ENCODE measurements at regions of chr17 and their contacts with region 1.

Region 1: DNA sequence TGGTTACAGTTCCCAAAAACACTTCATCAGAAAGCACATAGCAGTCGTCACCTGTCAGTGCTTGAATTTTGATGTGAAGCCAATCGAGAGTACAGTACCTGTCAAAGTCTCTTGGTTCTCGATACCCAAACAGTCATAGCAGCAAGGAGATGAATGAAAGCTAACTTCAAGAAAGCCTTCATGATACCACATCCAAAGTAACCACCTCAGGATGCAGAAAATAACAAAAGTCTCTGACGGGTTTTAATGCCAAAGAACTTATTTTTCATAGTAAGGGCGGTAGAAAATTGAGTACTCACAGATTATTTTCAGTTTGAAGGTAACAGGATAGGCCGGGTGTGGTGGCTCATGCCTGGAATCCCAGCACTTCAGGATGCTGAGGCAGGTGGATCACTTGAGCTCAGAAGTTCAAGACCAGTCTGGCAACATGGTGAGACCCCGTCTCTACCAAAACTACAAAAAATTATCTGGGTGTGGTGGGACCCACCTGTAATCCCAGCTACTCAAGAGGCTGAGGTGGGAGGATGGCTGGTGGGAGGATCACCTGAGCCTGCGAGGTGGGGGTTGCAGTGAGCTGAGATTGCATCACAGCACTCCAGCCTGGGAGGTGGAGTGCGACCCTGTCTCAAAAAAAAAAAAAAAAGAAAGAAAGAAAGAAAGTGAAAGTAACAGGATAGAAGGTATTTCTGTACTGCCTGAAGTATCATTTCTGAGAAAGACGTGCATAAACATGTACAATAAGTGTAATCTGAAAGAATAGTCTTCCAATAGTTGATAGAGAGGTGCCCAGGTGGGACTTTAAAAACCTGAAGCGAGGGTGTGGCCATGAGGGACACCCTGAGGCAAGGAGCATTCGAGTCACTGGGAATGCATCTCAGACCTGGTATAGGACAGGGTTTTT is 15.4 kb downstream of the MFSD11 start:
- DNase-seq: peak; percentile 70
- H3K4me3 Mint-ChIP-seq: peak overlapping the region; percentile 83
- H3K27ac Mint-ChIP-seq: peak overlapping the region; percentile 100
- H3K4me1 Mint-ChIP-seq: peaks cover 22% of the 10 kb centered on the region
- H3K27me3 Mint-ChIP-seq: no peaks in the 10 kb centered on the region

Region 2: GRCh38 chr17:76772842-76773525 is 19.7 kb after region 1 on chr17:
- CTCF ChIA-PET with region 1: no interaction called
- intact Hi-C with region 1: loop called (anchors 1 kb)
- DNase-seq: peak; percentile 79
- H3K4me3 Mint-ChIP-seq: peak overlapping the region; percentile 60
- H3K27ac Mint-ChIP-seq: peak overlapping the region; percentile 92
- H3K4me1 Mint-ChIP-seq: peaks cover 23% of the 10 kb centered on the region
- H3K27me3 Mint-ChIP-seq: no peaks in the 10 kb centered on the region

Region 3: DNA sequence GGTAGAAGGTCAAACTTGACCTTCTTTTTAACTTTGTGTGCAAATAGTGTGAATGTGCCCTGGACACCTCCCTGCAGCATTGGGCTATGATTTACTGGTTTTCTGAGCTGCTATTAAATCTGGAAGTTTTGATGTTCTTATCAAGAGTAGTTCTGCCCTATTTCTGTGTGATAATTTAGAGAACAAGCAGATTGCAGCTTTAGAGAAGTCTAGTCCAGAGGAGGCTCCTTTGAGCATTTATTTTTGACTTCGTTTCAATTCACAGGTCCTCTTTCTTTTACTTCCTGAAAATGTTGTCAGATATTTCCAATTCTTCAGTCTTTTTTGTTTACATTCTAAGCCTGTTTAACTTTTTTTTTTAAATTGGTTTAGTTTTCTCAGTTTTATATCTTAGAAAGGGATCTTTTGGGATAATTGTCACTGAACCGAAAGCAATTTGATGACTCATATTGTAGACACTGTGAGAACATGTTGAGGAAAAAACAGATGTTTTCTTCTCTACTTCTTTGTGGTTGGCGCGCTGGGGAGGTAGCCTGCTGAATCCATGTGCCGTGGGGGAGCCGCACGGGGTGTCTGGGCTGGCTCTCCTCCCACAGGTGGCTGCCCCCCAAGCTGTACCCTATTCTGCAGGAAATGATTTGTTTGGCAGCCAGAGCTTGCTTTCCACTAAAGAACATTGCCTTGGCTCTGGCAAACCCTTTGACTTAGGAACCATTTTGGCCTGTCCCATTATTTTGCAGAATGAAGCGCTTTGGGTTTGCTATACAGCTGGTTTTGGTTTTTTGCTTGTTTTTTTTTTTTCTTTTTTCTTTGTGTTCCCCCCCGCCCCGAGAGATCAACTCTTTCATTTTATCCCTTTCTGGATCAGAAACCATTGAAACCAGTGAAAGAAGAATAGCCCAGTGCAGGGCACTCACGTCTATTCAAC is 38.0 kb after region 1 on chr17:
- CTCF ChIA-PET with region 1: no interaction called
- intact Hi-C with region 1: loop called (anchors 5 kb)
- DNase-seq: peak; percentile 70
- H3K4me3 Mint-ChIP-seq: peak overlapping the region; percentile 27
- H3K27ac Mint-ChIP-seq: no peak overlapping the region
- H3K4me1 Mint-ChIP-seq: peaks cover 14% of the 10 kb centered on the region
- H3K27me3 Mint-ChIP-seq: no peaks in the 10 kb centered on the region

Region 4: DNA sequence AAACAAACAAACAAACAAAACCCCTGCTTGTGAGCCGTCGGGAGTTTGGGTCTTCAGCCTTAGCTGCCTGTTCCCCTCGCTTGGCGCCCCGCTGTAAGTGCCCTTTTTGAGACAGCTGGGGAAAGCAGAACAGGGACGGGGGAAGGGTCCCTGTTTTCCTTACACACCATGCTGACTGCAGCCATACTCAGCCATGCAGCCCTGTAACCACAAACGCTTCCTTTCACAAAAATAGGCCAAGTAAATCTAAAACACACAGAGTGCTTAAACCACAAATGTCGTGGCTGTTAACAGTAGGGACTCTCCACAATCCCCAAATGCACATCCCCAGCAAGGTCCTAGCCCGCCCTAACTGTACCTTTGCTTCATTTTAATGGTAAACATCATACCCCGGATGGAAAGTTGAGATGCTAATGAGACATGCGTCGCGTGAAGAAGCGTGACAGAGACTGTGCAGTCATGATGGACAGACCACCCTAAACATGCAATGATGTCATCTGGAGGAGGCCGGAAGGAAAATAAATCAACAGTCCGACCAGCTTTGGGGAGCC is 244.7 kb after region 1 on chr17:
- CTCF ChIA-PET with region 1: no interaction called
- intact Hi-C with region 1: loop called (anchors 2 kb)
- DNase-seq: peak; percentile 85
- H3K4me3 Mint-ChIP-seq: peak overlapping the region; percentile 45
- H3K27ac Mint-ChIP-seq: peak overlapping the region; percentile 78
- H3K4me1 Mint-ChIP-seq: peaks cover 55% of the 10 kb centered on the region
- H3K27me3 Mint-ChIP-seq: no peaks in the 10 kb centered on the region